Heart left ventricle (tissue), 16 donors: ENCODE measurements at regions of chr4 and their contacts with region 1.

Region 1: DNA sequence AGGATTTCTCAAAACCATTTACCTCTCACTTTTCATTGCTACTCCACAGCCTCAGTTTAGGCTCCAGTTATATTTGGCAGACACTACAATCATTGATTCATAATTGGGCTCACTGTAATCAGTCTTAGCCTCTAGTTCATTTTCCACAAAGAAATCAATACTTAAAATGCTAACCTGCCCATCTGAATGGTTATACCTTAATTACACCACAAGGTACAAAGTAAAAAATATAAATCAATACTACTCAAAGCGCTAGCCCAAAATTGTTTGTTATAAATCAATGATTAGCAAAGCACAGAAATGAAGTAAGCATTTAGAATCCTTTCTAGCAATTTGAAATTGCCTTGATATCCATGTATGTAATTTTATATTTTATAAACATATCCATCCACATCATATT is 222.6 kb upstream of the NDST3 start:
- DNase-seq: no peak
- ATAC-seq: no peak
- H3K4me3 ChIP-seq: no peak overlapping the region
- H3K27ac ChIP-seq: no peak overlapping the region
- H3K4me1 ChIP-seq: no peaks in the 10 kb centered on the region
- H3K27me3 ChIP-seq: no peaks in the 10 kb centered on the region
- CTCF ChIP-seq: no peak
- POLR2A ChIP-seq: no peak

Region 2: DNA sequence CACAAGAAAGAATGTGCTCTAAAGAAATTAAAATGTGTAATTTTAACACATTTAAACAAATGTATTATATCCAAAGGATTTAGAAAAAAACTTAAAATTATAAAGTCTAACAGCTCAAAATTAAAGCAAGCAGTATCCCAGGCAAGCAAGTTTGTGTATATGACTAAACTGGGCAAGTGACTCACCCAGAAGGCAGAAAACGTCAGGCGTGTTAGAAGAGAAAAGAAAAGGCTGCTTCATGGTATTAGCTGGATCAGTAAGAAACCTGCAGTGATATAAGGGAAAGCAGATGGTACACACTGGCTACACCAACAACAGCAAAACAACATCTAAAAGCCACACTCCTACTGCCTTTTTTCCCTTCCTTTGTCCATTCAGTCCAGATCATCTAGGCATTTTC is 28.0 kb before region 1 on chr4:
- intact Hi-C with region 1: loop called in 1 of 10 experiments (anchors 2 kb)
- DNase-seq: no peak
- ATAC-seq: no peak
- H3K4me3 ChIP-seq: no peak overlapping the region
- H3K27ac ChIP-seq: no peak overlapping the region
- H3K4me1 ChIP-seq: no peaks in the 10 kb centered on the region
- H3K27me3 ChIP-seq: no peaks in the 10 kb centered on the region
- CTCF ChIP-seq: no peak
- POLR2A ChIP-seq: no peak

Region 3: DNA sequence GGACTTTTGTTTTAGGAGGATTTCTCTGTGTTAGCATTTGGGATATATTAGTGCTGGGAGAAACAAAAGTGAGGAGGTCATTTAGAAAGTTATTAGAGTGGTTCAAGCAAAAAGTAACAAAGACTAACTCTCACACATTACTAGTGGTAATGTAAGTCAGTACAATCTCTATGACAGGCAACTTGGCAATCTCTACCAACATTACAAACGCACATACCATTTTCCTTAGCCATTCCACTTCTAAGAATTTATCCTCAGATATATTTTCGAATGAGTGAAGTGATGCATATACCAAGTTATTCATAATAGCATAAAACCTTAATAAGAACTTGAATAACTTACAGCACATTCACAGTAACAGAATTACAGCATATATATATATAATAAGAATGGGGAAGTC is 394.9 kb after region 1 on chr4:
- intact Hi-C with region 1: no loop called
- DNase-seq: no peak
- ATAC-seq: no peak
- H3K4me3 ChIP-seq: no peak overlapping the region
- H3K27ac ChIP-seq: no peak overlapping the region
- H3K4me1 ChIP-seq: no peaks in the 10 kb centered on the region
- H3K27me3 ChIP-seq: peaks cover 0 to 8% (median 0%) of the 10 kb centered on the region in 9 donors
- CTCF ChIP-seq: no peak
- POLR2A ChIP-seq: no peak